Activated CD4-positive, alpha-beta T cell treated with anti-CD3 and anti-CD28 coated beads, Interleukin-2, amount 10 ng/mL, durations not matched to agents 24 days and 14 days (primary cell): ENCODE measurements at regions of chr7 and their contacts with region 1.

Region 1: GRCh38 chr7:44082541-44083207 is 344 bp upstream of the POLM start:
- DNase-seq: peak; percentile 99
- H3K4me3 Mint-ChIP-seq: peak overlapping the region; percentile 85
- H3K27ac Mint-ChIP-seq: peak overlapping the region; percentile 80
- H3K4me1 Mint-ChIP-seq: peaks cover 26% of the 10 kb centered on the region
- H3K27me3 Mint-ChIP-seq: no peaks in the 10 kb centered on the region

Region 2: GRCh38 chr7:43148161-43148731 is 934.4 kb before region 1 on chr7:
- intact Hi-C with region 1: no loop called
- DNase-seq: no peak
- H3K4me3 Mint-ChIP-seq: no peak overlapping the region
- H3K27ac Mint-ChIP-seq: no peak overlapping the region
- H3K4me1 Mint-ChIP-seq: no peaks in the 10 kb centered on the region
- H3K27me3 Mint-ChIP-seq: peaks cover 13% of the 10 kb centered on the region

Region 3: GRCh38 chr7:43758029-43758821 is 324.4 kb before region 1 on chr7 and contains the start of gene BLVRA:
- intact Hi-C with region 1: no loop called
- DNase-seq: peak; percentile 93
- H3K4me3 Mint-ChIP-seq: peak within 1 kb of the TSS; percentile 80
- H3K27ac Mint-ChIP-seq: peak within 1 kb of the TSS; percentile 76
- H3K4me1 Mint-ChIP-seq: peaks cover 44% of the 10 kb centered on the region
- H3K27me3 Mint-ChIP-seq: peaks cover 3% of the 10 kb centered on the region
- total RNA-seq, gene BLVRA: 39.9 and 43.4 TPM in 2 replicates

Region 4: GRCh38 chr7:44097064-44097932 is 14.6 kb after region 1 on chr7:
- intact Hi-C with region 1: loop called (anchors 1 kb)
- DNase-seq: peak; percentile 70
- H3K4me3 Mint-ChIP-seq: peak overlapping the region; percentile 18
- H3K27ac Mint-ChIP-seq: peak overlapping the region; percentile 63
- H3K4me1 Mint-ChIP-seq: peaks cover 21% of the 10 kb centered on the region
- H3K27me3 Mint-ChIP-seq: peaks cover 2% of the 10 kb centered on the region

Region 5: DNA sequence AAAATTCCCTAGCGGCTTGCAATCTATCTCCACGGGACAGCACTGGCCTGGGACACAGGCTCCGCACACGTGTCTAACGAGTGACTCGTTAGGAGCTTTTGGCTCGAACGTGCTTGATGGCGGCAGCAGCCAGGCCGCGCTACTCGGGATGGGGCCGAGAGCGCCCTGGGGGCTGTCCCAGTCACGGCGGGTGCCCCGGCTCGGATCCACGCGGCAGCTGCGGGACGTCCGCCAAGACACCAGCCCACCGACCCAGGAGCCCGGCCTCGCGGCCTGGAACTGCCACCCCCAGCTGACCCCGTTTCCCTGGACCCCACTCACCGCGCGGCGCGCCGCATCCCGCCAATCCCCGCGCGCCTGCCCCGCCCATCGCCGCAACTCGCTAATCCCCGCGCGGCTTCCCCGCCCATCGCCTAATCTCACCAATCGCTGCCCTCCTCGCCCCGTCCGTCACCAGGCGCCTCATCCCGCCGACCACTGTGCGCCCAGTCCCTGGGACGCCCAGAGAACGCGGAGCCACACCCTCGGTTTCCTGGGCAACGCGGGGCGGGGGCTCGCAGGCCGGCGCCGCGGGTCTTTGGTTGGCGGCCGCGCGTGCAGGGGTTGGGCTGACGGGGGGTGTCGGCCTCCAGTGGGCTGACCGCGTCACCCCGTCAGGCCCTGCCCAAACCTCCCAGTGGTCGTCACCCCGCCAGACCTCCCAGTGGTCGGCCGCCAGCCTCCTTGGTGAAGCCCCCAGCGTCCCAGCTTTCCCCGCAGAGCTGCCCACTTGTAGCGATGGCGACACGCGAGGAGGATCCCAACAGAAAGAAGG is 40.7 kb after region 1 on chr7 and contains the start of gene POLD2:
- intact Hi-C with region 1: loop called (anchors 1 kb)
- DNase-seq: peak; percentile 100
- H3K4me3 Mint-ChIP-seq: peak within 1 kb of the TSS; percentile 88
- H3K27ac Mint-ChIP-seq: peak within 1 kb of the TSS; percentile 84
- H3K4me1 Mint-ChIP-seq: peaks cover 27% of the 10 kb centered on the region
- H3K27me3 Mint-ChIP-seq: peaks cover 17% of the 10 kb centered on the region
- total RNA-seq, gene POLD2: 259 and 286 TPM in 2 replicates

Region 6: DNA sequence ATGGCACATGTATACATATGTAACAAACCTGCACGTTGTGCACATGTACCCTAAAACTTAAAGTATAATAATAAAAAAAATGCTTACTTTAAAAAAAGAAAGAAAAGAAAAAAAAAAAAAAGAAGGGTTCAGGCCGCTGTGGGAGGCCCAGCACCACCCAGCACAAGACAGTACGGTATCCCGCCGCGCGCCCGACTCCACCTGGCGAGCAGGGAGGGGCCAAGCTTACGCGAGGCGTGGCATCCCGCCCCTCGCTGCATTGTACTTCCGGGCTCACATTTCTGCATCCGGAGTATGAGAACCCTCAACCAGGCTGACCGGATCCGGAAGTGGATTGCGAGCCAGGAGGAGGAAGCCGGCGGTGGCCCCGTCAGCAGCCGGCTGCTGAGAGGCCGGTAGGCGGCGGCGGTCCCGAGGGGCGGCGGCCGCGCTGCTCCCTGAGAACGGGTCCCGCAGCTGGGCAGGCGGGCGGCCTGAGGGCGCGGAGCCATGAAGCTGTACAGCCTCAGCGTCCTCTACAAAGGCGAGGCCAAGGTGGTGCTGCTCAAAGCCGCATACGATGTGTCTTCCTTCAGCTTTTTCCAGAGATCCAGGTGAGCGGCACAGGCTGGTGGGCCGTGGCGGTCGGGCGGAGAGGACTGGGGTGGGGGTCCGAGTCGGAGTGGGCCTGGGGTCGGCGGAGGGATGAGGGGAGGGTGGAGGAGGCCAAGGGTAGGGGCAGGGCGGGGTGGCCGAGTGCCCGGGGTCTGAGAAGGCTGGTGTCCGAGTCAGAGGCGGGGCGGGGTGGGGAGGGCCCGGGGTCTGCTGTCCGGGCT is 118.2 kb after region 1 on chr7 and contains the start of gene YKT6:
- intact Hi-C with region 1: loop called (anchors 1 kb)
- DNase-seq: peak; percentile 98
- H3K4me3 Mint-ChIP-seq: peak within 1 kb of the TSS; percentile 89
- H3K27ac Mint-ChIP-seq: peak within 1 kb of the TSS; percentile 65
- H3K4me1 Mint-ChIP-seq: peaks cover 33% of the 10 kb centered on the region
- H3K27me3 Mint-ChIP-seq: peaks cover 2% of the 10 kb centered on the region
- total RNA-seq, gene YKT6: 87.3 and 92.8 TPM in 2 replicates

Region 7: GRCh38 chr7:44307301-44307900 is 224.7 kb after region 1 on chr7:
- intact Hi-C with region 1: no loop called
- DNase-seq: no peak
- H3K4me3 Mint-ChIP-seq: no peak overlapping the region
- H3K27ac Mint-ChIP-seq: no peak overlapping the region
- H3K4me1 Mint-ChIP-seq: peaks cover 5% of the 10 kb centered on the region
- H3K27me3 Mint-ChIP-seq: peaks cover 27% of the 10 kb centered on the region

Region 8: GRCh38 chr7:44581879-44582603 is 499.4 kb after region 1 on chr7 and contains the start of gene TMED4:
- intact Hi-C with region 1: loop called (anchors 5 kb)
- DNase-seq: peak; percentile 100
- H3K4me3 Mint-ChIP-seq: peak within 1 kb of the TSS; percentile 92
- H3K27ac Mint-ChIP-seq: peak within 1 kb of the TSS; percentile 92
- H3K4me1 Mint-ChIP-seq: peaks cover 35% of the 10 kb centered on the region
- H3K27me3 Mint-ChIP-seq: peaks cover 4% of the 10 kb centered on the region
- total RNA-seq, gene TMED4: 78.4 and 80.2 TPM in 2 replicates